ENCODE measurements at regions of chr5 and their contacts with region 1.

Region 1: GRCh38 chr5:119328753-119329602 is 26.8 kb upstream of the TNFAIP8 start:
- DNase-seq: no peak
- ATAC-seq: peak; percentile 70
- H3K4me3 Mint-ChIP-seq: peak overlapping the region; percentile 66
- H3K27ac Mint-ChIP-seq: peak overlapping the region; percentile 97
- H3K4me1 Mint-ChIP-seq: peaks cover 73% of the 10 kb centered on the region
- H3K27me3 Mint-ChIP-seq: no peaks in the 10 kb centered on the region

Region 2: GRCh38 chr5:119315516-119315949 is 13.4 kb before region 1 on chr5:
- POLR2A ChIA-PET with region 1: interaction called, 13 read pairs
- DNase-seq: no peak
- ATAC-seq: peak; percentile 78
- H3K4me3 Mint-ChIP-seq: peak overlapping the region; percentile 64
- H3K27ac Mint-ChIP-seq: peak overlapping the region; percentile 88
- H3K4me1 Mint-ChIP-seq: peaks cover 79% of the 10 kb centered on the region
- H3K27me3 Mint-ChIP-seq: no peaks in the 10 kb centered on the region